Upper lobe of right lung (tissue), 1 donor: ENCODE measurements at regions of chr20 and their contacts with region 1.

Region 1: GRCh38 chr20:62675156-62675876 is 33.0 kb downstream of the SLCO4A1 start:
- DNase-seq: no peak
- ATAC-seq: peak; percentile 59
- H3K4me3 ChIP-seq: no peak overlapping the region
- H3K27ac ChIP-seq: no peak overlapping the region
- H3K4me1 ChIP-seq: no peaks in the 10 kb centered on the region
- H3K27me3 ChIP-seq: peaks cover 5% of the 10 kb centered on the region
- CTCF ChIP-seq: no peak

Region 2: DNA sequence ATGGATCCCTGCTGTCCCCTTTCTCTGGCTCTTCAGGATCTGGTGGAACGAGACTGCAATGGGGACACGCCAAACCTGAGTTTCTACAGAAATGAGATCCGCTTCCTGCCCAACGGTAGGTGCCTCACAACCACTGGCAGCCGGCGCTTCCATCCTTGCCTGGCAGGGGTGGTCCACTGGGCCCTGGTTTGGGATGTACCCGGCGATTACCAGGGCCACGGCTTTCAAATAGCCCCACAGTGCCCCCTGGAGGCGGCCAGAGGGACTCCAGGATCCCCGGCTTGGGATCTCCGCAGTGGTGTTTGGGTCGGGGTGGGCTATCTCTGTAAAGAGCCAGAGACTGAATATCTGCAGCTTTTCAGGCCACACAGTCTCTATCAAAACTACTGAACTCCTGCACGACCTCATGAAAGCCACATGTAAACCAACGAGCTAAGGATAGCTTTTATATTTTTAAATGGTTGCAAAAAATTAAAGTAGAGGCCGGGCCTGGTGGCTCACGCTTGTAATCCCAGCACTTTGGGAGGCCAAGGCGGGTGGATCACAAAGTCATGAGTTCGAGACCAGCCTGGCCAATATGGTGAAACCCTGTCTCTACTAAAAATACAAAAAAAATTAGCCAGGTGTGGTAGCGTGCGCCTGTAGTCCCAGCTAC is 133.0 kb after region 1 on chr20:
- intact Hi-C with region 1: loop called (anchors 10 kb)
- DNase-seq: peak; percentile 84
- ATAC-seq: peak; percentile 60
- H3K4me3 ChIP-seq: no peak overlapping the region
- H3K27ac ChIP-seq: no peak overlapping the region
- H3K4me1 ChIP-seq: peaks cover 23% of the 10 kb centered on the region
- H3K27me3 ChIP-seq: no peaks in the 10 kb centered on the region
- CTCF ChIP-seq: peak; percentile 95